ENCODE measurements at regions of chr2 and their contacts with region 1.

Region 1: GRCh38 chr2:20955277-20956026 is 88.4 kb downstream of the APOB start:
- DNase-seq: no peak
- H3K4me3 ChIP-seq: no peak overlapping the region
- H3K27ac ChIP-seq: no peak overlapping the region
- H3K27me3 ChIP-seq: peaks cover 0 to 18% (median 0%) of the 10 kb centered on the region in 45 donors
- CTCF ChIP-seq: no peak

Region 2: GRCh38 chr2:20674974-20675679 is 280.3 kb before region 1 on chr2:
- intact Hi-C with region 1: loop called in 1 of 2 experiments (anchors 5 kb)
- DNase-seq: no peak
- H3K4me3 ChIP-seq: no peak overlapping the region
- H3K27ac ChIP-seq: peak overlapping the region in 21 of 59 donors; percentile 1 to 58 (median 22)
- H3K27me3 ChIP-seq: peaks cover 0 to 49% (median 35%) of the 10 kb centered on the region in 45 donors
- CTCF ChIP-seq: no peak